AG04450 (cell line): ENCODE measurements at regions of chr9 and their contacts with region 1.

Region 1: DNA sequence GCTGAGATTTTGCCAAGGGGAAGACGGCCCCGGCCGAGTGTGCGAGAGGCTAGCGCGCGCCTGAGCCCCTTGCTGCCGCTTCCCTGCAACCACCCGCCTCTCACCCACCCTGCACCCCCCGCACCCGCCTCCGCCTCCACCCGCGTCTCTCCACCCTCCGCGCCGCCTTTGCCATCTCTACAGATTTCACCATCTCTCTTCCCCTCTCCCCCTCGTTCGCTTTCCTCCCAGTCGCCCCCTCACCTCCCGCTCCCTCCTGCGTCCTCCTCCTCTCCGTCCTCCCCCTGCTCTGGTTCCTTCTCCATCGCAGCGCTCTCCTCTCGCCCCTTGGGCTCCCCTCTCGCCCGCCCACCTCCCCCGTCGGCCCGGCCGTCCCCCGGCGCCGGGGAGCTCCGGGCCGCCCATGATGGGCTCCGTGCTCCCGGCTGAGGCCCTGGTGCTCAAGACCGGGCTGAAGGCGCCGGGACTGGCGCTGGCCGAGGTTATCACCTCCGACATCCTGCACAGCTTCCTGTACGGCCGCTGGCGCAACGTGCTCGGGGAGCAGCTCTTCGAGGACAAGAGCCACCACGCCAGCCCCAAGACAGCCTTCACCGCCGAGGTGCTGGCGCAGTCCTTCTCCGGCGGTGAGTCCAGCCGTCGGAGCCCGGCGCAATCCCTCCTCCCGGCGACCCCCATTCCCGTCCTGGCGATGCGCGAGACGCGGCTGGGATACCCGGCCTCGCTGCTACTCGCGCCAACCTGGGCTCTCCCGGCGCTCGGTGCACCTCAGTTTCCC is at the start of gene PRDM12:
- DNase-seq: no peak
- H3K4me3 ChIP-seq: no peak within 1 kb of the TSS
- H3K27ac ChIP-seq: no peak within 1 kb of the TSS
- H3K27me3 ChIP-seq: peaks cover 91% of the 10 kb centered on the region
- CTCF ChIP-seq: no peak
- polyA plus RNA-seq, gene PRDM12: not detected in 2 replicates

Region 2: DNA sequence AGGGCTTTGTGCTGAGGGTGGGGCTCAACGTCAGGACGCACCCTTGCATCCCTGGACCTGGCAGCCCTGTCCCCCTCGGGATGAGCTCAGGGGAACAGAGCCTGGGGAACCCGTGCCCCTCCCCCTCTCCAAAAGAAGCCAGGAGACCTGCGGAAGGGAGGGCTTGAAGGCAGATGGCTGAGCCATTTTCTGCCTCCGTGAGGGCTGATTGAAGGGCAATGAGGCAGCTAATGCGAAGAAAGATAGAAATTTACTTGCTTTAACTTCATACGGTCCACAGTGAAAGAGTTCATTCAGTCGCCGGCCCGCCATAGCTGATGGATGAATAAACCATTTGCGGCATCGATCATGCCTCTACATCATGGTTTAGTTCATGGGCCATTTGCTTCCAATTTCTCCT is 190.9 kb before region 1 on chr9:
- CTCF ChIA-PET with region 1: no interaction called
- POLR2A ChIA-PET with region 1: no interaction called
- DNase-seq: no peak
- H3K4me3 ChIP-seq: no peak overlapping the region
- H3K27ac ChIP-seq: no peak overlapping the region
- H3K27me3 ChIP-seq: peaks cover 29% of the 10 kb centered on the region
- CTCF ChIP-seq: no peak

Region 3: DNA sequence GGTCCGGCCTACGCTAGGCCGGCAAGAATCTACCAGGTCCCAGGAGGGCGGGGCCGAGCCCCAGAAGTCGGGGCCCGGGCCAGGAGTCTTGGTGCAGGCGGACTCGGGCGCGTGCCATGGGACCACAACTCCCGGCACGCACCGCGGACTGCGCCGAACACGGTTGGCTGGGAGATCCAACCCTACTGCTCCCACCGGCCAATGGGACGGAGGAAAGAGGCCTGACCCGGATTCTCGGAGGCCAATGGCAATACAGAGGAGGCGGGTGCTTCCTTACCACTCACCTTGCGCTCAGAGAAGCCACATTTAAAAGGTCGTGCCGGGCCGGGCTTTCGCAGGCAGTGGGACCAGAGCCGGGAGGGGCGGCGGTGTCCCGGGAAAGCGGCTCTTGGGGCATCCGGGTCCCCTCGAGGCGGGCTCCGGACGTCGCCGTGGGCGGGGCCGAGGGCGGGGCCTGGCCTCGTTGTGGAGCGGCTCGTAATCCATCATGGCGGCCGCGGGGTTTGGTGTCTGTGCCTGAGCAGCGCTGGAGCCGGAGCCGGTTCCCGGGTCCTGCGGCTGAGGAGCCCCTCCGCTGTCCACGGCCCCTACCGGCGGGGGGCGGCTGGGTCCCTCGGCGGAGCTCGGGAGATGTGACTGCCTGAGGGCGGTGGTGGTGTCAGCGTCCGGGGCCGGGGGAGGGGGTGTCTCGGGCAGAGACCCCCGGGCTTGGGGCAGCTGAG is 48.3 kb after region 1 on chr9:
- CTCF ChIA-PET with region 1: interaction called, 12 read pairs
- POLR2A ChIA-PET with region 1: no interaction called
- DNase-seq: peak; percentile 97
- H3K4me3 ChIP-seq: peak overlapping the region; percentile 78
- H3K27ac ChIP-seq: peak overlapping the region; percentile 96
- H3K27me3 ChIP-seq: no peaks in the 10 kb centered on the region
- CTCF ChIP-seq: no peak

Region 4: DNA sequence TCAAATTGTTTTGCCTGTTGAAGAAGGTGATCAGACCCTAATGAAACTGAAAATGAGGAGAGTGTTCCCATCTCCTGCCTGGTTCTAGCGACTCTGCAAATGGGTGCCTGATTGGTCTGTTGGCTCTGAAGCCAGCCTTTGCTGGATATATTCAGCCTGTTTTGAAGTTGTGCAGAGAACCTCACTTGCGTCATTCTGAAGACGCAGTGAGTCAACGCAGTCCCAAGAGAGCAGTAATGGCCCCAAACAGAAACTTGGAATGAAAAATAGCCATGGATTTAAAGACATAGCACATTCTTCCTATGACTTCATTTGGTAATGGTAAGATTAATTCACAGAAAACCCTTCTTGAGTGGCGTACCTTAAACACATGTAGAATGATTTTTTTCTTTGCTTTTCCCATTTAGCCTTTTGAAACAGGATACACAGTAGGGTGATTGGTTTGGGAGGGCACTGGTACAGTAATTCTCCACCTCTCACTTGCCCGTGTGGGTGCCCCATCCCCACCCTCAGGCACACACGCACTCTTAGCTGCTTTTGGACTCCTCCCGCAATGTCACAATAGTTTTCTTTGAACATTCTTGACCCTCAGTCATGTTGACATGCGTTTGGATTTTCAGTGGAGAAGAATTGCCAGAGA is 116.5 kb after region 1 on chr9:
- CTCF ChIA-PET with region 1: no interaction called
- POLR2A ChIA-PET with region 1: no interaction called
- DNase-seq: peak; percentile 85
- H3K4me3 ChIP-seq: peak overlapping the region; percentile 47
- H3K27ac ChIP-seq: peak overlapping the region; percentile 94
- H3K27me3 ChIP-seq: no peaks in the 10 kb centered on the region
- CTCF ChIP-seq: no peak